Transverse colon (tissue), 4 donors: ENCODE measurements at regions of chr5 and their contacts with region 1.

Region 1: DNA sequence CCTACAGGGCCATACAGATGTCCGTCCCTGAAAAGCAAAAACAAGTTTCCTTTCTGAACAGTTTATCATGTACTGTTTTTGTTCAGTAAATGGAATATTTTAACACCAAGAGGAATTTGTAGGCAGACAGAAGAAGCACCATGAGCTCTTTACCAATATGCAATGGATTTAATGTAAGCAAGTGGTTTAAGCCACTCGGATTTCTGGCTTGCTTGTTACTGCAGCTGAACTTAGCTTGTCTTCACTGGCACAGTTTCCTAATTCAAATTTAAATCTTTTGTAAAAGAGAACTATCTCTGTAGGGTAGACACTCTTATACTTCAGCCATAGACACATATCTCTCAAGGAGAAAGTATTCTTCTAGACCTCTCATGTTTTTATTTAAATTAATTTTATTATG is 12.7 kb upstream of the EBF1 start:
- DNase-seq: no peak
- H3K4me3 ChIP-seq: no peak overlapping the region
- H3K27ac ChIP-seq: no peak overlapping the region
- H3K4me1 ChIP-seq: no peaks in the 10 kb centered on the region
- H3K27me3 ChIP-seq: peaks cover 50% of the 10 kb centered on the region
- CTCF ChIP-seq: no peak
- EP300 ChIP-seq: no peak
- POLR2A ChIP-seq: no peak

Region 2: GRCh38 chr5:158695595-158696330 is 416.7 kb before region 1 on chr5:
- in situ Hi-C with region 1: loop called (anchors 5 to 10 kb)
- intact Hi-C with region 1: no loop called
- DNase-seq: peak; percentile 72
- H3K4me3 ChIP-seq: no peak overlapping the region
- H3K27ac ChIP-seq: no peak overlapping the region
- H3K4me1 ChIP-seq: peaks cover 0 to 5% (median 0%) of the 10 kb centered on the region in 4 donors
- H3K27me3 ChIP-seq: peaks cover 11% of the 10 kb centered on the region
- CTCF ChIP-seq: peak; percentile 83 to 97 (median 95)
- EP300 ChIP-seq: no peak
- POLR2A ChIP-seq: no peak

Region 3: GRCh38 chr5:158958021-158958994 is 154.1 kb before region 1 on chr5:
- in situ Hi-C with region 1: no loop called
- intact Hi-C with region 1: no loop called
- DNase-seq: no peak
- H3K4me3 ChIP-seq: no peak overlapping the region
- H3K27ac ChIP-seq: no peak overlapping the region
- H3K4me1 ChIP-seq: peaks cover 0 to 2% (median 0%) of the 10 kb centered on the region in 4 donors
- H3K27me3 ChIP-seq: no peaks in the 10 kb centered on the region
- CTCF ChIP-seq: no peak
- EP300 ChIP-seq: no peak
- POLR2A ChIP-seq: no peak